Activated CD4-positive, alpha-beta T cell treated with anti-CD3 and anti-CD28 coated beads for 36 hours (primary cell): ENCODE measurements at regions of chr1 and their contacts with region 1.

Region 1: GRCh38 chr1:66137235-66137634 is 344.5 kb downstream of the PDE4B start:
- DNase-seq: peak; percentile 5
- ATAC-seq: peak; percentile 96
- H3K4me3 Mint-ChIP-seq: no peak overlapping the region
- H3K27ac Mint-ChIP-seq: no peak overlapping the region
- H3K4me1 Mint-ChIP-seq: peaks cover 6% of the 10 kb centered on the region
- H3K27me3 Mint-ChIP-seq: peaks cover 5% of the 10 kb centered on the region

Region 2: GRCh38 chr1:66160719-66161118 is 23.5 kb after region 1 on chr1:
- CTCF ChIA-PET with region 1: no interaction called
- POLR2A ChIA-PET with region 1: no interaction called
- intact Hi-C with region 1: loop called in 1 of 2 experiments (anchors 2 kb)
- DNase-seq: no peak
- ATAC-seq: no peak
- H3K4me3 Mint-ChIP-seq: no peak overlapping the region
- H3K27ac Mint-ChIP-seq: no peak overlapping the region
- H3K4me1 Mint-ChIP-seq: no peaks in the 10 kb centered on the region
- H3K27me3 Mint-ChIP-seq: peaks cover 10% of the 10 kb centered on the region